Naive thymus-derived CD4-positive, alpha-beta T cell (primary cell): ENCODE measurements at regions of chr4 and their contacts with region 1.

Region 1: GRCh38 chr4:183430317-183430993 is 14.0 kb upstream of the CDKN2AIP start:
- DNase-seq: peak in 7 of 9 donors; percentile 25 to 51 (median 44)
- ATAC-seq: peak; percentile 68
- H3K4me3 ChIP-seq: peak overlapping the region; percentile 2
- H3K4me3 Mint-ChIP-seq: peak overlapping the region; percentile 63 to 77 (median 74)
- H3K27ac ChIP-seq: peak overlapping the region; percentile 52
- H3K27ac Mint-ChIP-seq: peak overlapping the region; percentile 78 to 95 (median 90)
- H3K4me1 ChIP-seq: peaks cover 16 to 44% of the 10 kb centered on the region in 2 donors
- H3K4me1 Mint-ChIP-seq: peaks cover 12 to 63% (median 51%) of the 10 kb centered on the region in 7 donors
- H3K27me3 ChIP-seq: no peaks in the 10 kb centered on the region
- H3K27me3 Mint-ChIP-seq: no peaks in the 10 kb centered on the region

Region 2: GRCh38 chr4:182448281-182449151 is 981.9 kb before region 1 on chr4:
- CTCF ChIA-PET with region 1: no interaction called
- POLR2A ChIA-PET with region 1: no interaction called
- intact Hi-C with region 1: no loop called
- DNase-seq: peak; percentile 3 to 45 (median 16)
- ATAC-seq: peak; percentile 75
- H3K4me3 ChIP-seq: peak overlapping the region; percentile 12
- H3K4me3 Mint-ChIP-seq: peak overlapping the region; percentile 52 to 79 (median 72)
- H3K27ac ChIP-seq: no peak overlapping the region
- H3K27ac Mint-ChIP-seq: no peak overlapping the region
- H3K4me1 ChIP-seq: peaks cover 5 to 11% of the 10 kb centered on the region in 2 donors
- H3K4me1 Mint-ChIP-seq: peaks cover 10 to 25% (median 23%) of the 10 kb centered on the region in 7 donors
- H3K27me3 ChIP-seq: peaks cover 0 to 23% of the 10 kb centered on the region in 2 donors
- H3K27me3 Mint-ChIP-seq: peaks cover 65 to 74% (median 67%) of the 10 kb centered on the region in 5 donors

Region 3: GRCh38 chr4:183407128-183407585 is 23.3 kb before region 1 on chr4:
- CTCF ChIA-PET with region 1: interaction called, 13 read pairs
- POLR2A ChIA-PET with region 1: interaction called, 14 read pairs
- intact Hi-C with region 1: loop called in 1 of 2 experiments (anchors 1 kb)
- DNase-seq: peak; percentile 83 to 96 (median 90)
- ATAC-seq: peak; percentile 99
- H3K4me3 ChIP-seq: peak overlapping the region; percentile 78
- H3K4me3 Mint-ChIP-seq: peak overlapping the region; percentile 60 to 88 (median 85)
- H3K27ac ChIP-seq: peak overlapping the region; percentile 72
- H3K27ac Mint-ChIP-seq: peak overlapping the region; percentile 80 to 95 (median 87)
- H3K4me1 ChIP-seq: no peaks in the 10 kb centered on the region
- H3K4me1 Mint-ChIP-seq: peaks cover 5 to 30% (median 17%) of the 10 kb centered on the region in 7 donors
- H3K27me3 ChIP-seq: no peaks in the 10 kb centered on the region
- H3K27me3 Mint-ChIP-seq: peaks cover 0 to 11% (median 0%) of the 10 kb centered on the region in 5 donors